ENCODE measurements at regions of chr5 and their contacts with region 1.

Region 1: DNA sequence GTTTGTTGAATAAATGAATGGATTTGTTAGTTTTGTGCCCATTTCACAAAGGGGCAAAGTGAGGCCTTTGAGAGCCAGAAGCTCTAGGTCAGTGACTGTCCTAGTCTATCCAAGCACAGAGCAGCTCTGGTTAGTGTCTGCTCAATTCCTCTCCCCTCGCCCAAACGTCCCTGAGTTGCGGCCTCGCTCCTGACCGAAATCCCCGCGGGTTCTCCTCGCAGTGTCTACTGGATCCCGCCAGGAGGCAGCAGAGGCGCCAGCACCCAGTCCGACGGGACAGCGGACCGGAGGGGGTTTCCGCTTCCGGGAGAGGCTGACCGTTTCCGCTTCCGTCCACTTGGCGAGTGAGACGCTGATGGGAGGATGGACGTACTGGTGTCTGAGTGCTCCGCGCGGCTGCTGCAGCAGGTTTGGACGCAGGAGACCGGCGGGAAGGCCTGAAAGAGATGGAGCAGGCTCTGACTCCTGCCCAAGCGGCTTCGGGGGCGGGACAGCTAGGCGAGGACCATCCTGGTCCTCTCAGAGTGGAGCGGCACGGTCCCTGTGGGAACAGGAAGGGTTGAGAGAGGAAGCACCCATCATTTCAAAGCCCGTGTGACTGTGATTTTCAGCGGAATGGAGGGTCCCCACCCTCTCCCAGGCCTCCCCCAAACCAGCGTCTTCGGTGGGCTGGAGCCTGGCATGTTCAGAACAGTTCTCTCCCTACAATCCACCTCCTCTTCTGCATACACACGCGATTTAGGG is at the start of gene RARS1:
- DNase-seq: peak; percentile 97
- H3K4me3 Mint-ChIP-seq: peak within 1 kb of the TSS; percentile 95
- H3K27ac Mint-ChIP-seq: peak within 1 kb of the TSS; percentile 93
- H3K4me1 Mint-ChIP-seq: peaks cover 26% of the 10 kb centered on the region
- H3K27me3 Mint-ChIP-seq: no peaks in the 10 kb centered on the region
- total RNA-seq, gene RARS1: 140 and 143 TPM in 2 replicates

Region 2: DNA sequence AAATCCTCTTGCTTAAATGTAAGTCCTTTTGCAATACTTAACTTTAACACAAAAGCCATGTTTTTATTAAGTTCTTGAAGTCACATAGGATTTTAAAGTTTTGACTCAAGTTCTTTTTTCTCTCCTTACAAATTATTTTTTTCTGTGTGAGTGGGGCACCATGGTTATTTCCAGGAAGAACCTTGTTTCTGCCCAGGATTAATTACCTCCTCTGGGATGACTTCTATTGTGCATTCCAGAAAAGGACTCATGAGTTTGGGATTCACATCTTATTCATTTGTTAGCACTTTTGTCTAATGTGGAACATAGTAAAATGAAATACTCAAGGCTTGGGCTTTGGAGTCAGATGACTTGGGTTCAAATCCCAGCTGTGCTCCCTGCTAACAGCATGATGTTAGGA is 616.3 kb before region 1 on chr5:
- intact Hi-C with region 1: no loop called
- DNase-seq: no peak
- H3K4me3 Mint-ChIP-seq: no peak overlapping the region
- H3K27ac Mint-ChIP-seq: no peak overlapping the region
- H3K4me1 Mint-ChIP-seq: no peaks in the 10 kb centered on the region
- H3K27me3 Mint-ChIP-seq: no peaks in the 10 kb centered on the region

Region 3: GRCh38 chr5:168268949-168269943 is 217.1 kb before region 1 on chr5:
- intact Hi-C with region 1: loop called (anchors 5 kb)
- DNase-seq: peak; percentile 90
- H3K4me3 Mint-ChIP-seq: peak overlapping the region; percentile 51
- H3K27ac Mint-ChIP-seq: no peak overlapping the region
- H3K4me1 Mint-ChIP-seq: peaks cover 9% of the 10 kb centered on the region
- H3K27me3 Mint-ChIP-seq: peaks cover 20% of the 10 kb centered on the region

Region 4: DNA sequence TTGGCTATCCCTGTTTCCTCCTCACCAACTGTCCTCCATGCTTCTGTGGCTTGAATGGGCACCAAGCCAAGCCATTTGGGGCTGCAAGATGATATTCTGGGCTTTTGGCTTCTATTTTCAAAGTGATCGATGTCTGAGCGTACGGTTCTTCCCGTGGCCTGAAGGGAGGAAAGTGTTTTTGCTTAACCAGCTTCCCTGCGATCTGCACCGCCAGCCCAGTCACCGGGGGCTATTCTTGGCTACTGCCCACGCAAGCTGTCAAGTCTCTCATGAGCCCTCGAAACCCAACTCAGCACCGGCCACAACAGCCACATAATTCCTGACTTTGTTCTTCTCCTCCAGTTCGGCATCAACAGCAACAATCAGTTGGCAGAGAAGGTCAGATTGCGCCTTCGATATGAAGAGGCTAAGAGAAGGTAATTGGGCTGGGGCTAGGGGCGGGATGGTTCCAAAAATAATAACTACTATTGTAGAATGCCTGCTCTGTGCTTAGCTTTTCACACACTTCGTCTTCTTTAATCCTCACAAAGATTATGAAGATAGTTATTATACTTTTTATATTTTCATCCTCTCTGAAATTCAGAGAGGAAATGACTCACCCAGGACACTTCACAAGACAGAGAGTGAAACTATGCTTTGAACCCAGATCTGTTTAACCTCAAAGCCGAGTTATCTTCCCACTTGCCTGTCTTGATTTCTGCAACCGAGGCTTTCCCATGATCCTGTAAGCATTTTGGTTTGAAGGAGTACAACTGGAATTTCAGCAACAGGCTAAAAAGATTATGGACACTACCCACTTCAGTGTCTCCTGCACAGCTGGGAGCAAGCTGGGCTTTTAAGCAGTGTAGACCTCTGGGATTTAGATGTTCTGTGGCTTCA is 76.5 kb before region 1 on chr5:
- intact Hi-C with region 1: loop called (anchors 5 kb)
- DNase-seq: peak; percentile 62
- H3K4me3 Mint-ChIP-seq: peak overlapping the region; percentile 53
- H3K27ac Mint-ChIP-seq: no peak overlapping the region
- H3K4me1 Mint-ChIP-seq: peaks cover 18% of the 10 kb centered on the region
- H3K27me3 Mint-ChIP-seq: peaks cover 43% of the 10 kb centered on the region

Region 5: DNA sequence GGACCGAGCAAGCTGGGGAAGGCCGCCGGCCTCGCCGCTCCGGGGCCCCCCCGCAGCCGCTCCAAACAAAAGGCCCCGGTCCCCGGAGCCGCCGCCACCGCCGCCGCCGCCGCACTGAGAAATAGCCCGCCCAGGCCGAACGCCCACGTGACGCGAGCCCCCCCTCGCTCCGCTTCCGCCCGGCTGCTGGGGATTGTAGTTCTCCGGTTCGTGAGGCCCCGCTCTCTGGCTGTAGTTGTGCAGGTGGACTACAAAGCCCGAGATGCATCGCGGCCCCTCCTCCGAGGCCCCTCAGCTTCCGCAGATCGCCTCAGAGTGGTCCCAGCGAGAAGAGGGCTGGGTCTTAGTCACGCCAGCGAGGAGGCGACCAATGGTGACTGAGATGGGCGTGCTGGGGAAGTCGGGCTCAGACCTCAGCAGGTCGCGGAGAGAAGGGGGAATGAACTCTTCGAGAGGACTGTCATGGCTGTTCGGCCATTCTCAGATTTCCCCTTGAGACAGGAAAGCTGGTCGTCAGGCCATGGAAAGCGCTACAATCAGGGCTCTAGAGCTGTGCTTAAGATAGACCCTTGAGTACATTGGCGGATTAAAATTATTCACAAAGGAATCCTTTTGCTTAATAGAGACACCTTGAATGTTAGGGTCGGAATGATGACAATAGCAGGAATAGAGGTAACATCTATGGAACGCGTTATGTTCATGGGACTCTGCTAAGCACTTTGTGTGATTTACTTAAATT is 93.3 kb after region 1 on chr5:
- intact Hi-C with region 1: loop called (anchors 1 kb)
- DNase-seq: peak; percentile 99
- H3K4me3 Mint-ChIP-seq: peak overlapping the region; percentile 95
- H3K27ac Mint-ChIP-seq: peak overlapping the region; percentile 100
- H3K4me1 Mint-ChIP-seq: peaks cover 30% of the 10 kb centered on the region
- H3K27me3 Mint-ChIP-seq: no peaks in the 10 kb centered on the region